ENCODE measurements at regions of chr6 and their contacts with region 1.

Region 1: GRCh38 chr6:149431905-149432775 is 32.1 kb downstream of the SUMO4 start:
- DNase-seq: peak; percentile 92 to 99
- H3K4me3 ChIP-seq: no peak overlapping the region
- H3K27ac ChIP-seq: no peak overlapping the region
- H3K4me1 ChIP-seq: 0 out of 7 replicates have a peak, but pooled peaks cover 0 to 2% (median 0%) of the 10 kb centered on the region in 4 experiments
- H3K27me3 ChIP-seq: no peaks in the 10 kb centered on the region
- CTCF ChIP-seq: peak; percentile 94 to 98 (median 95)
- EP300 ChIP-seq: no peak
- POLR2A ChIP-seq: no peak
- RAD21 ChIP-seq: peak; percentile 99 to 100

Region 2: DNA sequence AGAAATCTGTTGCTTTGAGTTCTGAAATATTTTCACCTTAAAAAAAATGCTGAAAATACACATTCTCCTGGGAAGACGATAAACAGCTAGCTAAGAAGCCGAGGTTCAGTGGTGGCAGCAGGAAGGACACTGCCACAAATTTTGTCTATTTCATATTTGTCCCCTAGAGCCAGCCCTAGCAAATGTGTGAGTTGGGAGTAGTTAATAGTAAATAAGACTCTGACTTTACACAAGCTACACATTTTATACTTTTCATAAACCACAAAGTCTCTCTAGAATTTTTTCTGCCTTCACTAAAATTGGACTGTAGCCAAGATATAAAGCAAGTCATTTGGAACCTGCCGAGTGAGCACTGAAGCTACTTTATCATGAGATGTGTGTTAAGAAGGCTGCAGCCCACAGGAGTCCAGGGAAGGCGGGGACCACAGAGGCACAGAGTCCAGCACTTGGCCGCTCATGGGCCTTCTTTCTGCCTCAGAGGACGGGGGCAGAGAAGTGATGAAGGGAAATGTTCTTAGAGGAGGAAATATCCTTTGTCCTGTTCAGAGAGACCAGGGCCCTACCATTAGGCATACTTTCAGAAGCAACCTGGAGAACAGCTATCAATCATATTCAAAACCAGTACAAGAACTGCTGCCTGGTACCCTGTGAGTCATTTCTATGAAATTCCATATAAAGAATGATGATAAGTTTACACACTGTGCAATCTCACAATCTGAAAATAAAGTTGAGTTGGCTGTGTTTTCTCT is 356.4 kb before region 1 on chr6:
- CTCF ChIA-PET with region 1: interaction called, 19 read pairs
- POLR2A ChIA-PET with region 1: no interaction called
- DNase-seq: no peak
- H3K4me3 ChIP-seq: no peak overlapping the region
- H3K27ac ChIP-seq: no peak overlapping the region
- H3K4me1 ChIP-seq: peaks cover 0 to 3% (median 0%) of the 10 kb centered on the region in 4 experiments; a peak in 3 of 7 replicates
- H3K27me3 ChIP-seq: no peaks in the 10 kb centered on the region
- CTCF ChIP-seq: no peak
- EP300 ChIP-seq: no peak
- POLR2A ChIP-seq: no peak
- RAD21 ChIP-seq: no peak

Region 3: DNA sequence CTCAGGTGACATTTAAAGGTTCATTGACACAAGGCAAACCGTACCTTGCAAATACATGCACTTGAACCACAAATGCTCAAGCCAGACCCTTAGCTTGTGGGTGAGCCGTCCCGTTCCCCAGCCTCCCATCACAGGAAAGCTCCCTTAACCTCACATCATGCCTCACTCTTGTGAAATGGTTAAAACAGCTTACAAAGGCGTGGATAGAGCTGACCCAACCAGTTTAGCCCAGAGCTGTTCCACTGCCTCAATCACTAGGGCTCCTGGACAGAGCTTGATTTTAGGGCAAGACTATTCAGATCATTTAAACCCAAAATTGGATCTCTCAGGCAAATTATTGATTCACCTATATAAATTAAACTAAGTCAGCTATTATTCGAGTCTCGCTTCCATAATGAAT is 344.2 kb before region 1 on chr6:
- CTCF ChIA-PET with region 1: interaction called, 15 read pairs
- POLR2A ChIA-PET with region 1: no interaction called
- DNase-seq: no peak
- H3K4me3 ChIP-seq: no peak overlapping the region
- H3K27ac ChIP-seq: no peak overlapping the region
- H3K4me1 ChIP-seq: no peaks in the 10 kb centered on the region
- H3K27me3 ChIP-seq: no peaks in the 10 kb centered on the region
- CTCF ChIP-seq: no peak
- EP300 ChIP-seq: no peak
- POLR2A ChIP-seq: no peak
- RAD21 ChIP-seq: no peak

Region 4: GRCh38 chr6:149190224-149190831 is 241.8 kb before region 1 on chr6:
- CTCF ChIA-PET with region 1: interaction called, 19 read pairs
- POLR2A ChIA-PET with region 1: interaction called, 5 read pairs
- DNase-seq: peak; percentile 46 to 82
- H3K4me3 ChIP-seq: no peak overlapping the region
- H3K27ac ChIP-seq: no peak overlapping the region
- H3K4me1 ChIP-seq: peaks cover 0 to 3% (median 0%) of the 10 kb centered on the region in 4 experiments; a peak in 1 of 7 replicates
- H3K27me3 ChIP-seq: no peaks in the 10 kb centered on the region
- CTCF ChIP-seq: peak; percentile 56 to 74 (median 65)
- EP300 ChIP-seq: no peak
- POLR2A ChIP-seq: no peak
- RAD21 ChIP-seq: peak; percentile 71 to 81

Region 5: GRCh38 chr6:149449831-149450678 is 17.9 kb after region 1 on chr6:
- CTCF ChIA-PET with region 1: interaction called, 16 read pairs
- POLR2A ChIA-PET with region 1: no interaction called
- DNase-seq: no peak
- H3K4me3 ChIP-seq: peak overlapping the region; percentile 46 to 67 (median 50); a peak in 7 of 8 replicates
- H3K27ac ChIP-seq: no peak overlapping the region
- H3K4me1 ChIP-seq: peaks cover 0 to 1% (median 0%) of the 10 kb centered on the region in 4 experiments; a peak in 2 of 7 replicates
- H3K27me3 ChIP-seq: peaks cover 16 to 32% (median 30%) of the 10 kb centered on the region in 4 experiments
- CTCF ChIP-seq: no peak
- EP300 ChIP-seq: no peak
- POLR2A ChIP-seq: no peak
- RAD21 ChIP-seq: no peak

Region 6: DNA sequence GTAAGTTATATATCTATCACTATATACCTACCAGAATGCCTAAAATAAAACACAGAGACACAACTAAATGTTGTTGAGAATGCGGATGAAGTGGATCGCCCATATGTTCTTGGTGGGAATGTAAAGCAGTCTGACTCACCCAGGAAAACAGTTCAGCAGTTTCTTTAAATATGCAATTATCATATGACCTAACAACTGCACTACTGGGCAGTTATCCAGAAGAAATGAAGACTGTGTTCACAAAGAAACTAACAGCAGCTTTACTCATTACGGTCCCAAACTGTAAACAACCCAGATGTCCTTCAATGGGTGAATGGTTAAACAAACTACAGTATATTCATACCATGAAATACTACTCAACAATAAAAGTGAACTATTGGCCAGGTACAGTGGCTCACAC is 66.9 kb after region 1 on chr6:
- CTCF ChIA-PET with region 1: no interaction called
- POLR2A ChIA-PET with region 1: no interaction called
- DNase-seq: no peak
- H3K4me3 ChIP-seq: no peak overlapping the region
- H3K27ac ChIP-seq: no peak overlapping the region
- H3K4me1 ChIP-seq: no peaks in the 10 kb centered on the region
- H3K27me3 ChIP-seq: no peaks in the 10 kb centered on the region
- CTCF ChIP-seq: no peak
- EP300 ChIP-seq: no peak
- POLR2A ChIP-seq: no peak
- RAD21 ChIP-seq: no peak

Region 7: DNA sequence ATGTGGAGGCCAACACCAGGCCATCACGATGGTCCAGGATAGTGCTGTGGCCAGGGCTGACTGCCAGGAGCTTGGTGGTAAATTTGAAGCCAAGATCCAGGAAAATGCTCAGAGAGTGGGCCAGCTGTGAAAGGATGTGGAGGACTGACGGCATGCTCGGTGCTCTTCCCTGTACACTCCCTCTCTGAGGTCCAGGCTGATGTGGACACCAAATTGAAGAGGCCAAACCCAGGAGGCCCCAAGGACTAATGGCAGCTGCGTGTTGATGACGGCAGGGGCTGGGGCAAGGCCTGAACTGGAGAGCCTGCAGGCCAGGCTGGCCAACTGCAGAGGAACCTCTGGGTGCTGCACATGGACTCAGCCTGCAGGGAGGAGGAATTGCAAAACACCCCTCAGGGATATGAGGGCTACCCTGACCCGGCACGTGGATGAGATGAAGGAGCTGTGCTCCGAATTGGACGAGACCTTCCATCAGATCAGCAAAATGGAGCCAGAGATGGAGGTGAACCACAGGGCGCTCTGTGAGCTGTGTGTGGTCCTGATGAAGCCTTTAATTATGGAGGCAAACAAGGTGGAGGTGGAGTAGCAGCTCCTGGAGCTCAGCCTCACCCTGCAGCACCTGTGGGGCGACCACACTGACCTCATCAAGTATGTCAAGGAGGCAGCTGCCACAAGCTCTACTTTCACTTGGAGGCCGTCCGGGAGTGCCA is 472.7 kb after region 1 on chr6:
- CTCF ChIA-PET with region 1: no interaction called
- POLR2A ChIA-PET with region 1: no interaction called
- DNase-seq: no peak
- H3K4me3 ChIP-seq: no peak overlapping the region
- H3K27ac ChIP-seq: no peak overlapping the region
- H3K4me1 ChIP-seq: no peaks in the 10 kb centered on the region
- H3K27me3 ChIP-seq: no peaks in the 10 kb centered on the region
- CTCF ChIP-seq: no peak
- EP300 ChIP-seq: no peak
- POLR2A ChIP-seq: no peak
- RAD21 ChIP-seq: no peak